ENCODE measurements at regions of chr5 and their contacts with region 1.

Region 1: DNA sequence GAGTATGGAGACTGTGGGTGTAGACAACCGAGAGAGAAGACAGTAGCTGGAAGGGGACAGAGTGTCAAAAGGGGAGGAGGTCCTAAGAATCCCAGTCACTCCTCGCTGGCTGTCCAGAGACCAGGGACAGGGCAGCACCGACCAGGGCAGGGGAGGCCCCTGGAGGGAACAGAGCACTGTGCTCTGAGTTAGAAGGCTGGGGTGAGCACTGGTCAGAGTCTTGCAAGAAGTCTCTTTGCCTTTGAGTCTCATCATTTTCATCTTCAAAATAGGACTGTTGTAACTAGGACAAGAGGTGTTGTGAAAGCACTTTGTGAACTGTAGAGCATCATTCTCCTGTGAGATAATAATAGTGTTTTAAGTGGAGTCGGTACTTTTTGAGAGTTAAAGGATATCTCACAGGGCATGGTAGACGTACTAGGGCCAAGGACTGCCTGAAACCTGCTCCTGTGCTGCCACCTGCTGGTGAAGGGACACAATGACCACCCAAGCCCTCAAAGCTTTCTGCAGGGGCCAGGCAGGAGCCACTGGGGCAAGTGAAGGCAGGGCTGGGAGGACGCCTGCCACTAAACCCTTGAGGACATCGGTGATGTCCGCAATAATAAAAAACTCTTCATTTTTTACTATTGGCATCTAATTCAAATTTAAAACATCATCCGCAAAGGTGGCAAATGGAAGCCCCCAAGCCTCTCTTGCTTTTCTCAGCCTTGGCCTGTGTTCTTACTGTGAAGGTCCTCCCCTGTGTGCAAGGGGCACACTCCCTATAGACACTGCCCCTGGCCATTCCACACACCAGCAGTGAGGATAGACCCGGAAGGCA is 28.2 kb downstream of the SLC6A7 start:
- DNase-seq: peak; percentile 93
- ATAC-seq: peak; percentile 94
- H3K4me3 ChIP-seq: no peak overlapping the region
- H3K27ac ChIP-seq: no peak overlapping the region
- H3K4me1 ChIP-seq: peaks cover 8% of the 10 kb centered on the region; the same call in 1 of the 2 replicates
- H3K27me3 ChIP-seq: no peaks in the 10 kb centered on the region
- CTCF ChIP-seq: peak; percentile 97

Region 2: GRCh38 chr5:149932445-149933350 is 285.4 kb before region 1 on chr5:
- CTCF ChIA-PET with region 1: no interaction called
- POLR2A ChIA-PET with region 1: no interaction called
- intact Hi-C with region 1: no loop called
- DNase-seq: peak; percentile 80
- ATAC-seq: peak; percentile 84
- H3K4me3 ChIP-seq: peak overlapping the region; percentile 71
- H3K27ac ChIP-seq: no peak overlapping the region
- H3K4me1 ChIP-seq: peaks cover 33% of the 10 kb centered on the region
- H3K27me3 ChIP-seq: no peaks in the 10 kb centered on the region
- CTCF ChIP-seq: peak; percentile 93

Region 3: GRCh38 chr5:150129813-150130492 is 88.1 kb before region 1 on chr5:
- CTCF ChIA-PET with region 1: interaction called, 7 read pairs
- POLR2A ChIA-PET with region 1: no interaction called
- intact Hi-C with region 1: loop called (anchors 1 kb)
- DNase-seq: peak; percentile 88
- ATAC-seq: peak; percentile 89
- H3K4me3 ChIP-seq: peak overlapping the region; percentile 59
- H3K27ac ChIP-seq: no peak overlapping the region
- H3K4me1 ChIP-seq: peaks cover 6% of the 10 kb centered on the region; the same call in 1 of the 2 replicates
- H3K27me3 ChIP-seq: no peaks in the 10 kb centered on the region
- CTCF ChIP-seq: peak; percentile 99

Region 4: DNA sequence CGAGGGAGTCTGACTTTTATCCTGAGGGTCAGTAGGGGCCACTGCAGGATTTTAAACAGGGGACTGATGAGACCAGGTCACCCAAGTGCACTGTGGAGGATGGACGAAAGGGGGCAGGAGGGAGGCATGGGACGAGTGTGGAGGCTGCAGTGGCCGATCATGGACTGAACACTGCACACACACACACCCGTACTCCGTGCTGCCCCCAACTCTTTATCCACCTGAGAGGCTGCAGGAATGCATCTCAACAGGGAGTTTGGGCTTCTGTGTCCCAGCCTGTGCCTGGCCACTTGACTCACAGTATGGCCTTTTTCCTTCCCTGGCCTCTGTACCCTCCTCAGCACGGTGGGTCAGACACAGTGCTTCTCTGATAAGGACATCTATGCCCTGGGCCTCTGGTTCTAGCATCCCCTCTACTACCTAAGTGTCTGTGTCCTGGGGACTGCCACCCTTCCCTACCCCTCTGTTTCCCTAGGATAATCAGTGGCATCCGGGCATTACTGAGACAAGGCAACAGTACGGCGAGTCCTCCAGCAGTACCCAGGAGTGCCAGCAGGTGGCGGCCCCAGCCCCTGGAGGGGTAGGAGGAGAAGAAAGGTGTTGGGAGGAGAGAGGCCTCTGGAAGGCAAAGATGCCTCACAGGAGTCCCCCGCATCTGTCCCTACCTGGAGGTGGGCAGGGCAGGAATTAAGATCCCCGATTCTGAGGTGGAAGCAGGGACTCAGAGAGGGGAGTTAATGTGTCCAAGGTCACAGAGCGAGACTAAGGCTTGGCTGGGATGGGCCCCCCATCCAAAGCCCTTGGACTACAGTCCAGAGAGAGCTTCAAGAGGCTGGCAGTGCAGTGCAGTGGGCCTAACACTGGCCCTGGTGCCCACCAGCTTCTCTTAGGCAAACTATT is 56.6 kb before region 1 on chr5:
- CTCF ChIA-PET with region 1: interaction called, 6 read pairs
- POLR2A ChIA-PET with region 1: no interaction called
- intact Hi-C with region 1: loop called (anchors 1 kb)
- DNase-seq: peak; percentile 97
- ATAC-seq: peak; percentile 92
- H3K4me3 ChIP-seq: peak overlapping the region; percentile 51
- H3K27ac ChIP-seq: no peak overlapping the region
- H3K4me1 ChIP-seq: peaks cover 5% of the 10 kb centered on the region; the same call in 1 of the 2 replicates
- H3K27me3 ChIP-seq: no peaks in the 10 kb centered on the region
- CTCF ChIP-seq: peak; percentile 93

Measured in PC-3 (cell line).